ENCODE measurements at regions of chr1 and their contacts with region 1.

Region 1: DNA sequence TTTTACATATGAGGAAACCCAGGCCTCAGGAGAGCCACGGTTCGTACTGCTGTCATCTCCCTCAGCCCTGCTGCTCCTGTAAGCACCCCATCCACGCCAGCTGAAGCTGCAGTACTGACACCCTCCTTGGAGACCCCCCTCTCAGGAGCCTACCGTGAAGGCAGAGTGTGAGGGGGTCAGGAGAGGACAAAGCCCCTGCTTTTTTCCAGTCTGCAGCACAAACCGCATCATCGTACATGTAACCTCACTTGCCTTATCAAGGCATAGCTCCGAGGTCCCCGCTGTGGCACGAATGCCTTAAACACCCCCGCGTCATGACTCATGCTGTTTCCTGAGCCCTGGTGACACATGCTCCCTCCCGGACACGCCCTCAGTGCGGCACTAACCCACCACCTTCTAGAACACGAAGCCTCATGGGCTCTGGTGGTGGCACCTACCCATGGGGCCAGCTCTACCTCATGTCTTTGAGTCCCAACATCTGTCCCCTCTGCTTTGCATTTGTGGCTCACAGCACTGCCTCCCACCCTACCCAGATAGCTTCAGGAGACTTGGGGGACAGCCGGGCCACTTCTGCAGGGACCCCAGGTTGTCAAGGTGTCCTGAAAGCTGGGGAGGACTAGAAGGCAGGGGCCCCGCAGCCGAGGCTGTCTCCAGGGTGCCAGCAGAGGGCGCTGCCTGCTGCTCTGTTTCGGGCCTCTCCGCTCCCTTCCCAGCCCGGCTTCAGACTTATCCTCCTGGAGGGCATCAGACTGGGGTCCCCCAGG is 4.9 kb downstream of the SH3BGRL3 start:
- DNase-seq: peak; percentile 86 to 97 (median 91)
- H3K4me3 ChIP-seq: peak overlapping the region; percentile 60
- H3K4me3 Mint-ChIP-seq: peak overlapping the region; percentile 68 to 94 (median 87)
- H3K27ac ChIP-seq: peak overlapping the region; percentile 60
- H3K27ac Mint-ChIP-seq: peak overlapping the region; percentile 92 to 100 (median 99)
- H3K4me1 ChIP-seq: peaks cover 93% of the 10 kb centered on the region
- H3K4me1 Mint-ChIP-seq: peaks cover 84 to 93% (median 87%) of the 10 kb centered on the region in 3 donors
- H3K27me3 ChIP-seq: no peaks in the 10 kb centered on the region
- H3K27me3 Mint-ChIP-seq: no peaks in the 10 kb centered on the region

Region 2: DNA sequence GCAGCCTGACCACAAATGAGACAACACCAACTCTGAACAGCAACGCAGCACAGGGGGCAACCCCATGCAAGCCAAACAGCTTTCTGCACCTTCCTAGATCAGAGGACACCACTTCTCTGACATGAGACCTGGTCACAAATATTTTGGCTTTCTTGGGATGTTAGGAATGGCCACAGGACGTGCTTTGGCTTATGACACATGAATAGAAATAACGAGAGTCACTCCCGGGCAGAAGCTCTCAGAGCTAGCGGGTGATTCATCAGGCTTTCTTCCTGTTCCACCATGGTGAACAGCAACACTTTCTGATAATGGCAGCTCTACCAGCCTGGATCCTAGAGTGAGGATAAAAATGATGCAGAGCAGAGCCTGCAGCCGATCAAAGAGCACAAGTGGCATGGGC is 326.3 kb before region 1 on chr1:
- CTCF ChIA-PET with region 1: no interaction called
- POLR2A ChIA-PET with region 1: no interaction called
- DNase-seq: no peak
- H3K4me3 ChIP-seq: no peak overlapping the region
- H3K4me3 Mint-ChIP-seq: no peak overlapping the region
- H3K27ac ChIP-seq: no peak overlapping the region
- H3K27ac Mint-ChIP-seq: peak overlapping the region in 4 of 8 donors; percentile 47 to 88 (median 66)
- H3K4me1 ChIP-seq: no peaks in the 10 kb centered on the region
- H3K4me1 Mint-ChIP-seq: peaks cover 0 to 15% (median 10%) of the 10 kb centered on the region in 3 donors
- H3K27me3 ChIP-seq: no peaks in the 10 kb centered on the region
- H3K27me3 Mint-ChIP-seq: no peaks in the 10 kb centered on the region

Region 3: DNA sequence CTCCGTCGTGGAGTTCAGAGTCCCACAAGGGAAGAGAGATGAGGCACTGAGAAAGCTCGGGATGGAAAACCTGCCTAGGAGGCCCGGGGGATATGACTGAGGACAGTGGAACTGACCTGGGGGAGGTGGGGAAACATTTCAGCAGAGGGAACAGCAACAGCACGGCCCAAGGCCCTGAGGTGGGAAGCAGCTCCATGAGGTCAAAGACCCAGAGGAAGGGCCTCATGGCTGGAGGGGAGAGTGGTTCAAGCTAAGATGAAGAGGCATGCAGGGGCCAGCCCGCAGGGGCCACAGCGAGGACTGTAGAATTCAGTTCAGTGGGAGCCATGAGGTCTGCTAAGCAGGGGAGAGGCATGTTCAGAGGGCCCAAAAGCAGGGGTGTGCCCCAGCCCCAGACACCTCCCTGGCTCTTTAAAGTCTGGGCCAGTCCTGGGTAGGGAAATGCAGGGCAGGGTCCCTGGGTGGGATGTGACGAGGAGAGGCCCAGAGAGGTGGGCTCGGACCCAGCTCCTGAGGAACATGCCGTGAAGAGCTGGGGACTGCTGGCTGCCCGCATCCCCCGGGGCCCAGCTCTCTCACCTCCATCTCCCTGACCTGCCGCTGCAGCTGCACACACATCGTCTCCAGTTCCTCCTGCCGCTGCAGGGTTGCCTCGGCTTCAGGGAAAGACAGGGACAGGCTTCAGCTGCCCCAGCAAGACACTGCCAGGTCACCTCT is 11.7 kb after region 1 on chr1:
- CTCF ChIA-PET with region 1: interaction called, 13 read pairs
- POLR2A ChIA-PET with region 1: interaction called, 9 read pairs
- DNase-seq: no peak
- H3K4me3 ChIP-seq: no peak overlapping the region
- H3K4me3 Mint-ChIP-seq: no peak overlapping the region
- H3K27ac ChIP-seq: no peak overlapping the region
- H3K27ac Mint-ChIP-seq: peak overlapping the region in 5 of 8 donors; percentile 42 to 80 (median 50)
- H3K4me1 ChIP-seq: peaks cover 14% of the 10 kb centered on the region
- H3K4me1 Mint-ChIP-seq: peaks cover 18 to 34% (median 19%) of the 10 kb centered on the region in 3 donors
- H3K27me3 ChIP-seq: no peaks in the 10 kb centered on the region
- H3K27me3 Mint-ChIP-seq: peaks cover 0 to 2% of the 10 kb centered on the region in 2 donors

Region 4: GRCh38 chr1:26321315-26322041 is 36.7 kb after region 1 on chr1:
- CTCF ChIA-PET with region 1: interaction called, 840 read pairs
- POLR2A ChIA-PET with region 1: interaction called, 287 read pairs
- DNase-seq: peak; percentile 85 to 94 (median 90)
- H3K4me3 ChIP-seq: peak overlapping the region; percentile 93
- H3K4me3 Mint-ChIP-seq: peak overlapping the region; percentile 75 to 99 (median 91)
- H3K27ac ChIP-seq: no peak overlapping the region
- H3K27ac Mint-ChIP-seq: peak overlapping the region; percentile 41 to 100 (median 95)
- H3K4me1 ChIP-seq: peaks cover 46% of the 10 kb centered on the region
- H3K4me1 Mint-ChIP-seq: peaks cover 47 to 63% (median 53%) of the 10 kb centered on the region in 3 donors
- H3K27me3 ChIP-seq: no peaks in the 10 kb centered on the region
- H3K27me3 Mint-ChIP-seq: peaks cover 0 to 2% of the 10 kb centered on the region in 2 donors

Region 5: GRCh38 chr1:26363549-26364448 is 79.0 kb after region 1 on chr1:
- CTCF ChIA-PET with region 1: interaction called, 28 read pairs
- POLR2A ChIA-PET with region 1: interaction called, 4 read pairs
- DNase-seq: peak; percentile 75 to 87 (median 78)
- H3K4me3 ChIP-seq: no peak overlapping the region
- H3K4me3 Mint-ChIP-seq: peak overlapping the region in 5 of 7 donors; percentile 4 to 72 (median 61)
- H3K27ac ChIP-seq: no peak overlapping the region
- H3K27ac Mint-ChIP-seq: peak overlapping the region in 5 of 8 donors; percentile 18 to 59 (median 32)
- H3K4me1 ChIP-seq: peaks cover 46% of the 10 kb centered on the region
- H3K4me1 Mint-ChIP-seq: peaks cover 60 to 84% (median 66%) of the 10 kb centered on the region in 3 donors
- H3K27me3 ChIP-seq: peaks cover 14% of the 10 kb centered on the region
- H3K27me3 Mint-ChIP-seq: peaks cover 11 to 25% of the 10 kb centered on the region in 2 donors

Region 6: GRCh38 chr1:26378088-26378878 is 93.5 kb after region 1 on chr1:
- CTCF ChIA-PET with region 1: interaction called, 72 read pairs
- POLR2A ChIA-PET with region 1: interaction called, 9 read pairs
- DNase-seq: peak; percentile 79 to 95 (median 81)
- H3K4me3 ChIP-seq: peak overlapping the region; percentile 47
- H3K4me3 Mint-ChIP-seq: peak overlapping the region; percentile 46 to 85 (median 75)
- H3K27ac ChIP-seq: peak overlapping the region; percentile 75
- H3K27ac Mint-ChIP-seq: peak overlapping the region; percentile 80 to 97 (median 94)
- H3K4me1 ChIP-seq: peaks cover 70% of the 10 kb centered on the region
- H3K4me1 Mint-ChIP-seq: peaks cover 67 to 79% (median 71%) of the 10 kb centered on the region in 3 donors
- H3K27me3 ChIP-seq: no peaks in the 10 kb centered on the region
- H3K27me3 Mint-ChIP-seq: peaks cover 0 to 3% of the 10 kb centered on the region in 2 donors

Measured in CD8-positive, alpha-beta memory T cell (primary cell).